Caco-2 (cell line): ENCODE measurements at regions of chr3 and their contacts with region 1.

Region 1: DNA sequence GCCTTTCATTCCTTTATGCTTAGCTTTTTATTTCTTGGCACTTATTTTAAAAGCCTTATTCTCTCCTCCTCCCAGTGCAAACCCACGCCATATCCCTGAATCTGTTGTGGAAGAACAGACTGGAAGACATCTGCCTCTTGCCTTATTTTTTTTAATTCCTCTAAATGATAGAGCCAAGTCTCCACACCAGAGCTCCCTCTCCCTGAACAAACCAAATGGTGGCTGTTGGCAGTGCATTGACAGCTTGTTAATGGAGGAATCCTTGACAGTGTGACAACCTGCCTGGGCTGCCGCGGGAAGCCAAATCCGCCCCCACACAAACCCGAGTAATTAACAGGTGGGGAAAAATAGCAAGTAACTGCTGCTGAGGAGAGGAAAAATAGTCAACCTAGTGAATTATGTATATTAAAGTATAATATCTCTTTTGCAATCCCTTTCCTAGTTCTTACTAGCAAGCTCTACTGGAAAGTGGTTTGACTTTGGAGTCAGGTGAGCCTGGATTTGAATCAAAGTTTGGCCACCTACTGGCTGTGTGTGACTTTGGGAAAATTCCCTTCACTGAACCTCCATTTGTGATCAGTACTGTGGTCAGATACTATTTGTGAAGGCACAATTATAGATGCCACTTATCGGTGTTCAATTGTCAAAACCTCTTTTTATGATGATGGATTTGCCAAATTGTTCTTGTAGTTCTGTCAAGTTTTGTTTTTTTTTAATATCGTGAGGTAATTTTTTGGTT is 589.6 kb downstream of the PDCD6IP start:
- DNase-seq: peak in 1 of 2 experiments; percentile 9
- H3K4me3 ChIP-seq: no peak overlapping the region
- H3K4me3 Mint-ChIP-seq: no peak overlapping the region
- H3K27ac Mint-ChIP-seq: no peak overlapping the region
- H3K4me1 ChIP-seq: no peaks in the 10 kb centered on the region
- H3K4me1 Mint-ChIP-seq: no peaks in the 10 kb centered on the region
- H3K27me3 ChIP-seq: no peaks in the 10 kb centered on the region
- H3K27me3 Mint-ChIP-seq: no peaks in the 10 kb centered on the region
- CTCF ChIP-seq: peak in 1 of 2 experiments; percentile 33

Region 2: GRCh38 chr3:34260271-34261006 is 127.6 kb before region 1 on chr3:
- CTCF ChIA-PET with region 1: no interaction called
- POLR2A ChIA-PET with region 1: no interaction called
- intact Hi-C with region 1: loop called (anchors 10 kb)
- DNase-seq: peak; percentile 45 to 63
- H3K4me3 ChIP-seq: no peak overlapping the region
- H3K4me3 Mint-ChIP-seq: no peak overlapping the region
- H3K27ac Mint-ChIP-seq: no peak overlapping the region
- H3K4me1 ChIP-seq: no peaks in the 10 kb centered on the region
- H3K4me1 Mint-ChIP-seq: peaks cover 7% of the 10 kb centered on the region
- H3K27me3 ChIP-seq: no peaks in the 10 kb centered on the region
- H3K27me3 Mint-ChIP-seq: peaks cover 4% of the 10 kb centered on the region
- CTCF ChIP-seq: peak; percentile 51 to 74